HEK293T (cell line): ENCODE measurements at regions of chr6 and their contacts with region 1.

Region 1: GRCh38 chr6:42563697-42564505 is at the start of gene UBR2:
- DNase-seq: peak; percentile 91

Region 2: GRCh38 chr6:42530751-42531150 is 33.1 kb before region 1 on chr6:
- CTCF ChIA-PET with region 1: no interaction called
- POLR2A ChIA-PET with region 1: no interaction called
- DNase-seq: no peak

Region 3: DNA sequence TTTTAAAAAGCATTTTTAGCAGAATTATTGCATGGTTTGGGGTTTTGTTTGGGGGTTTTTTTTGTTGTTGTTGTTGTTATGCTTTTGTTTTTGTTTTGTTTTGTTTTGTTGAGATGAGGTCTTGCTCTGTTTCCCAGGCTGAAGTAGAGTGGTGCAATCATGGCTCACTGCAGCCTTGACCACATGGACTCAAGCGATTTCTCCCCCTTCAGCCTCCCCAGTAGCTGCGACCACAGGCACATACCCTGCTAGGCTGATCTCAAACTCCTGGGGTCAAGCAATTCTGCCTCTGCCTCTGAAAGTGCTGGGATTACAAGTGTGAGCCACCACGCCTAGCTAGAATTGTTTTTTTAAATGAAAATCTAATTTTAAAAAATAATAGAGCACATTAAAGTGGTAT is 35.7 kb after region 1 on chr6:
- CTCF ChIA-PET with region 1: no interaction called
- POLR2A ChIA-PET with region 1: interaction called, 10 read pairs
- DNase-seq: no peak

Region 4: GRCh38 chr6:42831237-42831636 is 267.3 kb after region 1 on chr6:
- CTCF ChIA-PET with region 1: no interaction called
- POLR2A ChIA-PET with region 1: no interaction called
- DNase-seq: no peak